ENCODE measurements at regions of chr11 and their contacts with region 1.

Region 1: DNA sequence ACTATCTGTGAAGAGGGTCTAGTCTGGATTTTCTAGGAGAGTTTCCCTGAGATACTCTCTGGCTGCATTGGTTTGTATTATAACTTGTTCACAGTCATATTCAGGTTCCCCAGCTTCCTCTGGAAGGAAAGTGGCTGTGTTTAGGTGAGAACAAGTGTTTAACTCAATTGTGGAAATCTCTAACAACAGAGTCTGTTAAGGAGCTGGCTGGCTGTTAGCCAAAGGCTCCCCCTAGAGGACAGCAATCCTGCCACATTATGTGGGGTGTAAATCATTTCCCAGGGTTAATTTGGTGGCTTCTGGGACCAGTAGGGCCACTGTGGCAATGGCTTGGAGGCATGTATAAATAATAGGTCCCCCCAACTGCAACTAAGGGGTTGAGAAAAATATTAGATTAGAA is 18.4 kb downstream of the MS4A6E start:
- DNase-seq: peak; percentile 25
- H3K4me3 Mint-ChIP-seq: no peak overlapping the region
- H3K27ac Mint-ChIP-seq: no peak overlapping the region
- H3K4me1 Mint-ChIP-seq: no peaks in the 10 kb centered on the region
- H3K27me3 Mint-ChIP-seq: no peaks in the 10 kb centered on the region

Region 2: DNA sequence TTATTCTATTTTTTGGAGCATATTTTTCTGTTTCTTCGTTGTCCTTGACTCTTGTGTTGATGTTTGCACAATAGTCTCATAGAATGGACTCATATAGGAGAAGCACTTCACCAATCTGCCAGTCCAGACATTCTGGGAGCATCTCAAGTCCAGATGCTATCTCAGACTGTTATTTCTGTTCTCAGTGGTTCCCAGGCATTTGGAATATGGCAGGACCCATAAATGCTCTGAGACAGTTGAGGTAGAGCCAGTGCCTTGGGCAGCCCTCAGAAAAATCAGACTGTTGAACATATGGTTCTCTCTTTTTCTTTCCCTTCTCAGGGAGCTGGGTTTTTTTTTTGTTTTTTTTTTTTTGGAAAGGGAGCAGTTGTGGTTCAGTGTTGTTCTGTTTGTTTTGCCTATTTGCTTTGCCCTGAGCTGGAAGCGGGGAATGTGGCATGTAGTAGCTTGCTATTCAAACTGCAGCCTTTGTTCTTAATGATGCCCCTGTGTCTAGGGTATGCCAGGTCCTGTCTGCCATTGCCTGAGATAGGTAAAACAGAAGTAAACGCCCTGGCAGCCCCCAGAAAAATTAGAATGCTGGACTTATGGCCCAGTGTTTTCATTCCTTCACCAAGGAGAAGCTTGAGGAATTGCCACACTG is 260.7 kb before region 1 on chr11:
- CTCF ChIA-PET with region 1: no interaction called
- DNase-seq: no peak
- H3K4me3 Mint-ChIP-seq: no peak overlapping the region
- H3K27ac Mint-ChIP-seq: no peak overlapping the region
- H3K4me1 Mint-ChIP-seq: no peaks in the 10 kb centered on the region
- H3K27me3 Mint-ChIP-seq: no peaks in the 10 kb centered on the region

Region 3: DNA sequence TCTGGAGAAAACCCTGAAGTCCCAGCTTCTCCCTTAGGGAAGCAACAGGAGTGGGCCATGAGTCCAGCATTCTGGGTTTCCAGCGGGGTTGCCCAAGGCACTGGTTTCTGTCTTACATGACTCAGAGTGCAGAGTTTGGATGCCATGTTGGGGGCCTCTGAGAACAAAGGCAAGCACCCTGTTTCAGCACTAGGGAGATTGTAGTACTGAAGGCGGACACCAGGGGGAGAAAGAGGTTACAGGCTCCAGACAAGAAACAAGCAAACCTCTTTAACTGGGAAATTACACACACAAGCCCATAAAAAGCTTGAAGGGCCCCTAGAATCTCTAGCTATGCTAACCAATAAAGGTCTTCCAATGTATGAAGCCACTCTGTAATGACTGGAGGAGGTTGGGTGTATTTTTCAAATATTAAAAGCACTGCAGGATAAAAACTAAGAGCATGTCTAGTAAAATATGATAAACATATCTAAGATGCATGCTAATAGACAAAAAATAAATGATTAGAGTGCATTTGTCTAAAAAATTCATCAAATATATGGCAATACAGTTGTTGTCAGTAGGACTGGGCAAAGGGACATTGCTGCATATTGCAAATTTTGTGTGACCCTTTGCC is 11.4 kb before region 1 on chr11:
- CTCF ChIA-PET with region 1: interaction called, 11 read pairs
- DNase-seq: peak; percentile 74
- H3K4me3 Mint-ChIP-seq: no peak overlapping the region
- H3K27ac Mint-ChIP-seq: no peak overlapping the region
- H3K4me1 Mint-ChIP-seq: no peaks in the 10 kb centered on the region
- H3K27me3 Mint-ChIP-seq: peaks cover 8% of the 10 kb centered on the region

Measured in activated naive CD4-positive, alpha-beta T cell treated with anti-CD3 and anti-CD28 coated beads, Interleukin-2, amount 10 ng/mL, durations not matched to agents 7 days and 5 days (primary cell).